Activated B cell treated with CpG ODN at 0.5 μM for 24 hours (primary cell): ENCODE measurements at regions of chr1 and their contacts with region 1.

Region 1: GRCh38 chr1:175319418-175320230 is 127.0 kb upstream of the KIAA0040 start:
- DNase-seq: peak; percentile 50
- ATAC-seq: peak; percentile 87
- H3K4me3 Mint-ChIP-seq: peak overlapping the region; percentile 76
- H3K27ac Mint-ChIP-seq: peak overlapping the region; percentile 42
- H3K4me1 Mint-ChIP-seq: peaks cover 29% of the 10 kb centered on the region
- H3K27me3 Mint-ChIP-seq: no peaks in the 10 kb centered on the region
- CTCF ChIP-seq: no peak

Region 2: GRCh38 chr1:175146529-175147213 is 173.0 kb before region 1 on chr1:
- CTCF ChIA-PET with region 1: interaction called, 252 read pairs
- POLR2A ChIA-PET with region 1: interaction called, 3 read pairs
- intact Hi-C with region 1: no loop called
- DNase-seq: peak; percentile 63
- ATAC-seq: peak; percentile 92
- H3K4me3 Mint-ChIP-seq: no peak overlapping the region
- H3K27ac Mint-ChIP-seq: no peak overlapping the region
- H3K4me1 Mint-ChIP-seq: peaks cover 15% of the 10 kb centered on the region
- H3K27me3 Mint-ChIP-seq: peaks cover 24% of the 10 kb centered on the region
- CTCF ChIP-seq: no peak

Region 3: GRCh38 chr1:175174309-175175165 is 145.1 kb before region 1 on chr1:
- CTCF ChIA-PET with region 1: interaction called, 17 read pairs
- POLR2A ChIA-PET with region 1: no interaction called
- intact Hi-C with region 1: no loop called
- DNase-seq: no peak
- ATAC-seq: no peak
- H3K4me3 Mint-ChIP-seq: no peak overlapping the region
- H3K27ac Mint-ChIP-seq: peak overlapping the region; percentile 72
- H3K4me1 Mint-ChIP-seq: peaks cover 88% of the 10 kb centered on the region
- H3K27me3 Mint-ChIP-seq: no peaks in the 10 kb centered on the region
- CTCF ChIP-seq: no peak

Region 4: GRCh38 chr1:175192630-175193526 is 126.7 kb before region 1 on chr1 and contains the start of gene KIAA0040:
- CTCF ChIA-PET with region 1: interaction called, 18 read pairs
- POLR2A ChIA-PET with region 1: interaction called, 6 read pairs
- intact Hi-C with region 1: loop called (anchors 2 kb)
- DNase-seq: peak; percentile 54
- ATAC-seq: peak; percentile 53
- H3K4me3 Mint-ChIP-seq: peak within 1 kb of the TSS; percentile 99
- H3K27ac Mint-ChIP-seq: peak within 1 kb of the TSS; percentile 97
- H3K4me1 Mint-ChIP-seq: peaks cover 92% of the 10 kb centered on the region
- H3K27me3 Mint-ChIP-seq: no peaks in the 10 kb centered on the region
- CTCF ChIP-seq: no peak
- total RNA-seq, gene KIAA0040: 55.5 and 57.2 TPM in 2 replicates

Region 5: GRCh38 chr1:175221666-175222175 is 97.9 kb before region 1 on chr1:
- CTCF ChIA-PET with region 1: no interaction called
- POLR2A ChIA-PET with region 1: no interaction called
- intact Hi-C with region 1: loop called (anchors 5 kb)
- DNase-seq: no peak
- ATAC-seq: no peak
- H3K4me3 Mint-ChIP-seq: no peak overlapping the region
- H3K27ac Mint-ChIP-seq: no peak overlapping the region
- H3K4me1 Mint-ChIP-seq: peaks cover 78% of the 10 kb centered on the region
- H3K27me3 Mint-ChIP-seq: no peaks in the 10 kb centered on the region
- CTCF ChIP-seq: no peak

Region 6: GRCh38 chr1:176073524-176074157 is 754.0 kb after region 1 on chr1:
- CTCF ChIA-PET with region 1: no interaction called
- POLR2A ChIA-PET with region 1: no interaction called
- intact Hi-C with region 1: loop called (anchors 10 kb)
- DNase-seq: no peak
- ATAC-seq: no peak
- H3K4me3 Mint-ChIP-seq: no peak overlapping the region
- H3K27ac Mint-ChIP-seq: no peak overlapping the region
- H3K4me1 Mint-ChIP-seq: peaks cover 7% of the 10 kb centered on the region
- H3K27me3 Mint-ChIP-seq: no peaks in the 10 kb centered on the region
- CTCF ChIP-seq: no peak